BJ (cell line): ENCODE measurements at regions of chr1 and their contacts with region 1.

Region 1: GRCh38 chr1:165914136-165914798 is 86.9 kb downstream of the UCK2 start:
- DNase-seq: no peak
- H3K4me3 ChIP-seq: no peak overlapping the region
- H3K27me3 ChIP-seq: no peaks in the 10 kb centered on the region
- CTCF ChIP-seq: peak; percentile 83

Region 2: DNA sequence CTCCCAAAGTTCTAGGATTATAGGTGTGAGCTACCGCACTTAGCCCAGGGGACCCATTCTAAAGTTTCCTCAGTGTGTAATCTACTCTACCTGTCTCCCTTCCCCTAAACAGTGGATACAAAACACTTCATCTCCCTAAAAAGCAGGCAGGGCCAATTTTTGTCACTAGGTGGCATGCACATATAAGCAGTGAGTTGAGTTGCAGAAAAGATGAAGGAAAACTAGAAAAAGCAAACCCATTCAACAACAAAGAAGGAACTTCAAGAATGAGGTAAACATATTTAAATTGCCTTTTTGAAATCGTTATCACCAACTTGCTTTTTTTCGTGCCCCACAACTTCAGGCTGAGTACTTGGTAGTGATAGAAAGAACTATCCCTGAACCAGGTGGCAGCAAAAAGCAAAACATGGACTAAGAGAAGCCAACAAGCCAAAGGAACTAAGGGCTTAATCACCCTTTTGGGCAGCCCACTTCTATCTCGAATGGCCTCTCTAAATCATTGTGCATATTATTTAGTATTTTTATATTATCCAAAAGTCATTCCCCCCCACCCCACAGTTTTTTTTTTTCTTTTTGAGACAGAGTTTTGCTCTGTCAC is 196.2 kb before region 1 on chr1:
- CTCF ChIA-PET with region 1: interaction called, 18 read pairs
- POLR2A ChIA-PET with region 1: no interaction called
- DNase-seq: peak; percentile 13
- H3K4me3 ChIP-seq: no peak overlapping the region
- H3K27me3 ChIP-seq: no peaks in the 10 kb centered on the region
- CTCF ChIP-seq: peak; percentile 84

Region 3: DNA sequence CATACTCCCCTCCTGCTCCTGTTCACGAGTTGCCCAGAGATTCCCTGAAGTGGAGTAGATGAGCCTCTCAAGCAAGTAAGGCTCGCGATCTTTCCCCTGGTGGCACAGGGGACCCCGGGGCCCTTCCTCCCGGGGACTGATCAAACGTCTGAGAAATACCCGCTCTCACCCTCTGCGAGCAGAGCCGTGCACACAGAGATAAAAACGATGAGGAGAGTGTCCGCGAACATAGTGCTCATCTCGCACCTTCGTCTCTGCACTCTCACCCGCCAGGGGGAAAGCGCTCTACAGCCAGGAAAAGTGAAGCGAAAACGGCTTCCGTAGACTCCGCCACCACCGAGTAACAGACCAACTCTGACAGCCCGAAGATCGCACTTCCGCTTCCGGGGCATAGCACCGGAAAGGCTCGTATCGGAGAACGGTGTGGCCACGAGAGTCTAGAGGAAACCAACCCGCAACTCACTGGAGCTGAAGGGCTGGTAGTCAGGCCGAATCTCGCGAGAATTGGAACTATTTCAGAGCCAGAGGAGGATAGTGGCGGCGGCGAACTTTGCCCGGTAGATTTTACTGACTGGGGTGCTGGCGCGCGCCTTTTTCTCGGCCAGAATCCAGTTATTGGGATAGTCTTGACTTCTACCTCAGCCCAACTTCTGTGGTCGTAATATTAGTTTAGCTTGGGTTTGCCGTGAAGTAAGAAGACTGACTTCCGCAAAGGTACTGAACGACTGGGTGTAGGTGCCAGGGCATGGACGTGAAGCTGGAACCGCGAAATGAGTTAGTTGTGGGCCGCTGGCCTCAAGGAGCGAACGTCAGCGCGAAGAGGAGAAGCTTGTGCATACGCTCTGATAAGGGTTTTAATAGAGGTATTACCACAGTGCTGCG is 145.5 kb before region 1 on chr1 and contains the start of gene TMCO1:
- CTCF ChIA-PET with region 1: interaction called, 12 read pairs
- POLR2A ChIA-PET with region 1: no interaction called
- DNase-seq: peak; percentile 87
- H3K4me3 ChIP-seq: peak within 1 kb of the TSS; percentile 64
- H3K27me3 ChIP-seq: no peaks in the 10 kb centered on the region
- CTCF ChIP-seq: peak; percentile 23; the same call in 1 of the 2 replicates
- polyA plus RNA-seq, gene TMCO1: 203 and 244 TPM in 2 replicates

Region 4: DNA sequence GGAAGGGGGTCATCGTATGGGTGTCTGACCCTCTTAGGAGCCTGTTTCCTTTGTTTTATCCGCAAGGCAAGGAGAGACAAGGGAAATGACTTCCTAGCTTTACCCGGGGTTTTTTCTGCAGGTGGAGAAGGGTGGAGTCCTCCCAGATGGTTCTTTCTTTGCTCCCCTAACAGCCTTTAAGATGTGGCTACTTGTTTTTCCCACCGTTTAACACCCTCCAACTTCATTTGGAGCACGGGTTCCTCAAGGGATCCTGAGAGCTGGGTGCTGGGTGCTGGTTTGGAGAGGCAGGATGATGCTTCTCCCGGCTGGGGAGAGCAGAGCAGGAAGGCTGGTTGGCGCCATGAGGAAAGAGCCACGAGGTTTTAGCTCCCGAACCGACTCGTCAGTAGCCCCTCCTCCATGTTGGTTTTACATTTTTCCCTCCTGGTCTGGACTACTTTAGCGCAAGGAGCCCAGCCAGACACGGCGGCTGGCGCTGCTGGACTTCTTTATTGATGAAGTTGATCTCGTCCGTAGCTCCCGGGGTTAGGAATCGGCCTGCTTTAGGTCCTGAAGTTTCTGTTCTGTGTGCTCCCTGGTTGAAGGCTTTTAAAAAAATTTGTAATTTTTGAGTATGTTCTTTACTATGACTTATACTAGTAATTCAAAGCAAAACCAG is 85.5 kb before region 1 on chr1:
- CTCF ChIA-PET with region 1: interaction called, 17 read pairs
- POLR2A ChIA-PET with region 1: no interaction called
- DNase-seq: peak; percentile 37
- H3K4me3 ChIP-seq: peak overlapping the region; percentile 46
- H3K27me3 ChIP-seq: no peaks in the 10 kb centered on the region
- CTCF ChIP-seq: no peak

Region 5: GRCh38 chr1:165903672-165904071 is 10.6 kb before region 1 on chr1:
- CTCF ChIA-PET with region 1: interaction called, 24 read pairs
- POLR2A ChIA-PET with region 1: no interaction called
- DNase-seq: no peak
- H3K4me3 ChIP-seq: no peak overlapping the region
- H3K27me3 ChIP-seq: no peaks in the 10 kb centered on the region
- CTCF ChIP-seq: no peak

Region 6: DNA sequence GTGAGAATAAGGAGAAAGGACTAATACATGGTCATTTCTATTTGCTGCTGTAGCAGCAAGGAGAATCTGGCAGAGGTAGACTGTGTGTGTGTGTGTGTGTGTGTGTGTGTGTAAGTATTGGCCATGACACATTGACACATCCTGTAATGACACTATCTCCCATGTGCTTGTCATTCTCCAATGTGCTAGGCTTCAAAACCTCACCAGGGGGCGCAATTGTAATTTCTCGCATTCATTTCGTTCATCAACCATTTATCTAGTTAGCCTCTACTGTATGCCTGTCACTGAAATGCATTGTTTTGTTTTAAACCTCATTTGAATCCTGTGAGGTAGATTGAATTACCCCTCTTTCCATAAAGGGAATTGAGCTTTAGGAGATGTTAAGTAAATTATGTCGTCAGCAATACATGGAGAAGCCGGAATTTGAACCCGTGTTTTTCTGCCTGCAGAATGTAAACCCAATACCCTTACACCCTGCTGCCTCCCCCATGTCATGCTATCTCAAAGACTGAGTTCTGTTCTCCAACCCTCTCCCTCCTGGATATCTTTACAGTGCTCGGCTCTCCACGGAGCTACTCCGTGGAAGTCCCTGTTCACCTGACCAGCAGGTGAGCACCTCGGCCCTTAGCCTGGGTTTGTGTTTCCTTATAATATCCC is 13.9 kb after region 1 on chr1:
- CTCF ChIA-PET with region 1: interaction called, 18 read pairs
- POLR2A ChIA-PET with region 1: no interaction called
- DNase-seq: no peak
- H3K4me3 ChIP-seq: no peak overlapping the region
- H3K27me3 ChIP-seq: no peaks in the 10 kb centered on the region
- CTCF ChIP-seq: peak; percentile 76